ENCODE measurements at regions of chr4 and their contacts with region 1.

Region 1: GRCh38 chr4:80989921-80990544 is 40.5 kb upstream of the BMP3 start:
- DNase-seq: peak; percentile 66
- ATAC-seq: peak; percentile 36
- H3K4me3 ChIP-seq: no peak overlapping the region
- H3K4me3 Mint-ChIP-seq: peak overlapping the region; percentile 11
- H3K27ac ChIP-seq: no peak overlapping the region
- H3K27ac Mint-ChIP-seq: no peak overlapping the region
- H3K4me1 ChIP-seq: peaks cover 11 to 18% of the 10 kb centered on the region in 2 donors
- H3K4me1 Mint-ChIP-seq: peaks cover 25% of the 10 kb centered on the region
- H3K27me3 ChIP-seq: no peaks in the 10 kb centered on the region
- H3K27me3 Mint-ChIP-seq: no peaks in the 10 kb centered on the region
- CTCF ChIP-seq: peak; percentile 93

Region 2: GRCh38 chr4:79638735-79639134 is 1351.3 kb before region 1 on chr4:
- CTCF ChIA-PET with region 1: no interaction called
- POLR2A ChIA-PET with region 1: no interaction called
- intact Hi-C with region 1: no loop called
- DNase-seq: no peak
- ATAC-seq: no peak
- H3K4me3 ChIP-seq: no peak overlapping the region
- H3K4me3 Mint-ChIP-seq: no peak overlapping the region
- H3K27ac ChIP-seq: no peak overlapping the region
- H3K27ac Mint-ChIP-seq: no peak overlapping the region
- H3K4me1 ChIP-seq: no peaks in the 10 kb centered on the region
- H3K4me1 Mint-ChIP-seq: no peaks in the 10 kb centered on the region
- H3K27me3 ChIP-seq: no peaks in the 10 kb centered on the region
- H3K27me3 Mint-ChIP-seq: peaks cover 6% of the 10 kb centered on the region
- CTCF ChIP-seq: no peak

Region 3: GRCh38 chr4:80360084-80360483 is 629.9 kb before region 1 on chr4:
- CTCF ChIA-PET with region 1: interaction called, 41 read pairs
- POLR2A ChIA-PET with region 1: no interaction called
- intact Hi-C with region 1: loop called (anchors 1 kb)
- DNase-seq: no peak
- ATAC-seq: no peak
- H3K4me3 ChIP-seq: no peak overlapping the region
- H3K4me3 Mint-ChIP-seq: no peak overlapping the region
- H3K27ac ChIP-seq: no peak overlapping the region
- H3K27ac Mint-ChIP-seq: no peak overlapping the region
- H3K4me1 ChIP-seq: no peaks in the 10 kb centered on the region
- H3K4me1 Mint-ChIP-seq: peaks cover 3% of the 10 kb centered on the region
- H3K27me3 ChIP-seq: peaks cover 0 to 15% (median 6%) of the 10 kb centered on the region in 4 experiments
- H3K27me3 Mint-ChIP-seq: peaks cover 34% of the 10 kb centered on the region
- CTCF ChIP-seq: no peak

Region 4: GRCh38 chr4:80592950-80593349 is 397.1 kb before region 1 on chr4:
- CTCF ChIA-PET with region 1: interaction called, 13 read pairs
- POLR2A ChIA-PET with region 1: no interaction called
- intact Hi-C with region 1: loop called (anchors 1 kb)
- DNase-seq: no peak
- ATAC-seq: peak; percentile 47
- H3K4me3 ChIP-seq: no peak overlapping the region
- H3K4me3 Mint-ChIP-seq: no peak overlapping the region
- H3K27ac ChIP-seq: no peak overlapping the region
- H3K27ac Mint-ChIP-seq: no peak overlapping the region
- H3K4me1 ChIP-seq: no peaks in the 10 kb centered on the region
- H3K4me1 Mint-ChIP-seq: peaks cover 3% of the 10 kb centered on the region
- H3K27me3 ChIP-seq: no peaks in the 10 kb centered on the region
- H3K27me3 Mint-ChIP-seq: no peaks in the 10 kb centered on the region
- CTCF ChIP-seq: peak; percentile 17

Region 5: GRCh38 chr4:81040012-81040659 is 50.1 kb after region 1 on chr4:
- CTCF ChIA-PET with region 1: interaction called, 23 read pairs
- POLR2A ChIA-PET with region 1: no interaction called
- intact Hi-C with region 1: loop called (anchors 5 kb)
- DNase-seq: peak; percentile 62
- ATAC-seq: no peak
- H3K4me3 ChIP-seq: no peak overlapping the region
- H3K4me3 Mint-ChIP-seq: no peak overlapping the region
- H3K27ac ChIP-seq: no peak overlapping the region
- H3K27ac Mint-ChIP-seq: no peak overlapping the region
- H3K4me1 ChIP-seq: peaks cover 5 to 10% of the 10 kb centered on the region in 2 donors
- H3K4me1 Mint-ChIP-seq: peaks cover 14% of the 10 kb centered on the region
- H3K27me3 ChIP-seq: no peaks in the 10 kb centered on the region
- H3K27me3 Mint-ChIP-seq: peaks cover 10% of the 10 kb centered on the region
- CTCF ChIP-seq: peak; percentile 79

Region 6: GRCh38 chr4:81052119-81053068 is 62.4 kb after region 1 on chr4:
- CTCF ChIA-PET with region 1: interaction called, 8 read pairs
- POLR2A ChIA-PET with region 1: no interaction called
- intact Hi-C with region 1: loop called (anchors 5 kb)
- DNase-seq: peak; percentile 72
- ATAC-seq: peak; percentile 79
- H3K4me3 ChIP-seq: no peak overlapping the region
- H3K4me3 Mint-ChIP-seq: no peak overlapping the region
- H3K27ac ChIP-seq: peak overlapping the region; percentile 26 to 36
- H3K27ac Mint-ChIP-seq: peak overlapping the region; percentile 43
- H3K4me1 ChIP-seq: peaks cover 8 to 14% of the 10 kb centered on the region in 2 donors
- H3K4me1 Mint-ChIP-seq: peaks cover 12% of the 10 kb centered on the region
- H3K27me3 ChIP-seq: no peaks in the 10 kb centered on the region
- H3K27me3 Mint-ChIP-seq: peaks cover 5% of the 10 kb centered on the region
- CTCF ChIP-seq: peak; percentile 90

Measured in B cell (primary cell).